ENCODE measurements at regions of chr2 and their contacts with region 1.

Region 1: GRCh38 chr2:30711646-30712085 is 95.6 kb downstream of the CAPN13 start:
- DNase-seq: peak; percentile 57
- ATAC-seq: peak; percentile 98
- H3K4me3 Mint-ChIP-seq: no peak overlapping the region
- H3K27ac Mint-ChIP-seq: no peak overlapping the region
- H3K4me1 Mint-ChIP-seq: peaks cover 11% of the 10 kb centered on the region
- H3K27me3 Mint-ChIP-seq: no peaks in the 10 kb centered on the region
- CTCF ChIP-seq: peak; percentile 79

Region 2: GRCh38 chr2:30095402-30095801 is 616.3 kb before region 1 on chr2:
- CTCF ChIA-PET with region 1: interaction called, 22 read pairs
- POLR2A ChIA-PET with region 1: no interaction called
- intact Hi-C with region 1: loop called (anchors 1 kb)
- DNase-seq: no peak
- ATAC-seq: no peak
- H3K4me3 Mint-ChIP-seq: no peak overlapping the region
- H3K27ac Mint-ChIP-seq: no peak overlapping the region
- H3K4me1 Mint-ChIP-seq: no peaks in the 10 kb centered on the region
- H3K27me3 Mint-ChIP-seq: peaks cover 21% of the 10 kb centered on the region
- CTCF ChIP-seq: no peak

Region 3: DNA sequence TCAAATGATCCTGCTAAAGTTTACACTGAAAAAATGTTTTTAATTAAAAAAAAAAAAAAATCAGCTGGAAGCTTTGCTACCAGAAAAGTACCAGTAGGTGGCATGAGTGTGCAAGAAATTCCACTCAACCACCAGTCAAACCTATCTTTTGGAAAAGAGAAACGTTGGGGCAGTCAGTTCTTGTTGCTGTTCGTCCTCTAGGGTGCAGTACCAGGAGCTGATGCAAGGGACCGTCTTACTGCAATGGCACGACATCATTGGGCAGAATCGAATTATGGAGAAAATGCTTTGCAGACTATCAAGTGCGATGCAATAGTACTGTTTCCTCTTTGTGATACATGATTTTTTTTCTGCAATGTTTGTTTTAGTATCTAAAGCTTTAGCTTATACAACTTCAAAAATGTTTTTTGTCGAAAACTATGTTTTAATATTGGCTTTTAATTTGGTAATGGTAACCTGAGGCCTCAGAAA is 546.6 kb before region 1 on chr2:
- CTCF ChIA-PET with region 1: interaction called, 514 read pairs
- POLR2A ChIA-PET with region 1: interaction called, 23 read pairs
- intact Hi-C with region 1: loop called (anchors 1 kb)
- DNase-seq: no peak
- ATAC-seq: peak; percentile 100
- H3K4me3 Mint-ChIP-seq: no peak overlapping the region
- H3K27ac Mint-ChIP-seq: no peak overlapping the region
- H3K4me1 Mint-ChIP-seq: peaks cover 21% of the 10 kb centered on the region
- H3K27me3 Mint-ChIP-seq: no peaks in the 10 kb centered on the region
- CTCF ChIP-seq: peak; percentile 45

Region 4: DNA sequence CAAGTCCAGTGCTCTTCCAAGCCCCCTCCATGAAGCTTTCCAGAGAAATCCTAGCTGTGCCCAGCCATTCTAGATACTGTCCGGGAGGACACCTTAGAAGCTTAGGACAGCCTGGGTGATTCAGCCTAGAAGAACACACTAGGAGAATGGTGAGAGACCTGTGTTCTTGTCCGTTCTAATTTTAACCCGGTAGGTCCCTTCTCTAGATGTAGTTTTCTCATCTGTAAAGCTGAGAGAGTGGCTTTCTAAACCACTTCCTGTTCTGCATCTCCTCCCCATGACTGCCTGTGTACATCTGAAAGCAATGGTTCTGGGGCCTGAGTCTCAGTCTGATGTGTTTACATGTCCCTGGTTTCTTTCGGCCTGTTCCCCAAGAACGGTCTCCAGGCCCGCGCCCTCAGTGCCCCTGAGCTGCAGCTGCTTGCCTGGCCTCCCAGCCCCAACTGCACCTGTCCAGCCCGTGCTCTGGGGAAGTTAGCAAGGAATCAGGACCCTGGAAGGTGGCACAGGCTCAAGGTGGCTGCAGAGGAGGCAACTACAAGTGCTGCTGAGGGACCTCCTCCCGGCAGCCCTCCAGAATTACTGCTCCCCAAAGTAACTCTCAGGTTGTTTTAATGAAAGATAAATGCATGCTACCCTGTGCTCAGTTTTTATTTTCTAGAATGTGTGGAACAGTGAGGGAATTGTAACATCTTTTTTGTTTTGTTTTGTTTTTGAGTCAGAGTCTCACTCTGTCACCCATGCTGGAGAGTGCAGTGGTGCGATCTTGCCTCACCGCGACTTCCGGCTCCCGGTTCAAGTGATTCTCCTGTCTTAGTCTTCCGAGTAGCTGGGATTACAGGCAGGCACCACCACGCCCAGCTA is 374.5 kb before region 1 on chr2:
- CTCF ChIA-PET with region 1: interaction called, 3 read pairs
- POLR2A ChIA-PET with region 1: no interaction called
- intact Hi-C with region 1: loop called (anchors 2 kb)
- DNase-seq: peak; percentile 49
- ATAC-seq: peak; percentile 85
- H3K4me3 Mint-ChIP-seq: peak overlapping the region; percentile 76
- H3K27ac Mint-ChIP-seq: peak overlapping the region; percentile 98
- H3K4me1 Mint-ChIP-seq: peaks cover 95% of the 10 kb centered on the region
- H3K27me3 Mint-ChIP-seq: no peaks in the 10 kb centered on the region
- CTCF ChIP-seq: no peak

Region 5: GRCh38 chr2:30747211-30747610 is 35.5 kb after region 1 on chr2:
- CTCF ChIA-PET with region 1: no interaction called
- POLR2A ChIA-PET with region 1: no interaction called
- intact Hi-C with region 1: no loop called
- DNase-seq: no peak
- ATAC-seq: no peak
- H3K4me3 Mint-ChIP-seq: no peak overlapping the region
- H3K27ac Mint-ChIP-seq: no peak overlapping the region
- H3K4me1 Mint-ChIP-seq: no peaks in the 10 kb centered on the region
- H3K27me3 Mint-ChIP-seq: peaks cover 6% of the 10 kb centered on the region
- CTCF ChIP-seq: no peak

Region 6: GRCh38 chr2:30862054-30862651 is 150.5 kb after region 1 on chr2:
- CTCF ChIA-PET with region 1: interaction called, 9 read pairs
- POLR2A ChIA-PET with region 1: no interaction called
- intact Hi-C with region 1: loop called (anchors 1 kb)
- DNase-seq: no peak
- ATAC-seq: peak; percentile 76
- H3K4me3 Mint-ChIP-seq: no peak overlapping the region
- H3K27ac Mint-ChIP-seq: no peak overlapping the region
- H3K4me1 Mint-ChIP-seq: peaks cover 18% of the 10 kb centered on the region
- H3K27me3 Mint-ChIP-seq: peaks cover 2% of the 10 kb centered on the region
- CTCF ChIP-seq: no peak

Region 7: GRCh38 chr2:31219131-31219969 is 507.7 kb after region 1 on chr2:
- CTCF ChIA-PET with region 1: no interaction called
- POLR2A ChIA-PET with region 1: no interaction called
- intact Hi-C with region 1: loop called (anchors 5 kb)
- DNase-seq: peak; percentile 41
- ATAC-seq: peak; percentile 81
- H3K4me3 Mint-ChIP-seq: peak overlapping the region; percentile 79
- H3K27ac Mint-ChIP-seq: peak overlapping the region; percentile 99
- H3K4me1 Mint-ChIP-seq: peaks cover 97% of the 10 kb centered on the region
- H3K27me3 Mint-ChIP-seq: no peaks in the 10 kb centered on the region
- CTCF ChIP-seq: no peak

Region 8: DNA sequence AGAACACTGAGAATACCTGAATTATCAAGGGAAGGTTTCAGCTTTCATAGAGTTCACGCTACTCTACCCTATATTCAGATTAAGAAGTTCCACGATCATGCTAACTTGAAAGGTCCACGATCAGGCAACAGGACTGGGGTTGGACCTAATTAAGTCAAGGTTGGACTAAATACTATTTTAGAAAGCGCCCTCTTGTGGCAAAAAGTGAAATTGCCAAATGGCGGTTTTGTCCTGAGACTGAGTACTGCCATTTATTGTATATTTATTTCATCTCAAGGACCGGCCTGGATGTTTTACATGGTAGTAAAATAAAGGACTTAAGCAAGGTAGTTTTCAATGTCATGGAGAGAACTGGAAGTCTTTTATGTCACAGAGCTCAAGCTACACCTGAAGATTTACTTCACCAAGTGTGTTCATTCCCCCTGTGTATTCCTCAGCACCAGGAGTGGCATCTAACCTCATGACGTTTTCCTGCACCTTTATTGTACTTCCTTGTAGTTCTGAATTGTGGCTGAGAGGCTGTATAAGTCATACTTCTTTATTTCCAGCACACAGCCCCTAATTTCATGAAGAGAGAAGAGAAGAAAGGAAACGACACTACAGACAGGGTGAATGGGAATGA is 812.3 kb after region 1 on chr2:
- CTCF ChIA-PET with region 1: interaction called, 39 read pairs
- POLR2A ChIA-PET with region 1: no interaction called
- intact Hi-C with region 1: loop called (anchors 1 kb)
- DNase-seq: no peak
- ATAC-seq: no peak
- H3K4me3 Mint-ChIP-seq: no peak overlapping the region
- H3K27ac Mint-ChIP-seq: no peak overlapping the region
- H3K4me1 Mint-ChIP-seq: no peaks in the 10 kb centered on the region
- H3K27me3 Mint-ChIP-seq: peaks cover 30% of the 10 kb centered on the region
- CTCF ChIP-seq: peak; percentile 21